ENCODE measurements at regions of chr3 and their contacts with region 1.

Region 1: GRCh38 chr3:129160891-129161859 is at the start of gene ISY1:
- DNase-seq: peak; percentile 96
- H3K4me3 ChIP-seq: peak within 1 kb of the TSS; percentile 65 to 99 (median 96)
- H3K27ac ChIP-seq: peak within 1 kb of the TSS; percentile 90
- H3K4me1 ChIP-seq: peaks cover 19% of the 10 kb centered on the region
- H3K27me3 ChIP-seq: no peaks in the 10 kb centered on the region
- CTCF ChIP-seq: peak; percentile 85 to 96
- total RNA-seq, gene ISY1: 16.8 to 38.2 TPM

Region 2: GRCh38 chr3:129052675-129053074 is 108.5 kb before region 1 on chr3:
- CTCF ChIA-PET with region 1: no interaction called
- dilution Hi-C with region 1: no loop called
- in situ Hi-C with region 1: no loop called
- intact Hi-C with region 1: loop called (anchors 1 kb)
- DNase-seq: no peak
- H3K4me3 ChIP-seq: no peak overlapping the region
- H3K27ac ChIP-seq: no peak overlapping the region
- H3K4me1 ChIP-seq: no peaks in the 10 kb centered on the region
- H3K27me3 ChIP-seq: no peaks in the 10 kb centered on the region
- CTCF ChIP-seq: no peak

Region 3: DNA sequence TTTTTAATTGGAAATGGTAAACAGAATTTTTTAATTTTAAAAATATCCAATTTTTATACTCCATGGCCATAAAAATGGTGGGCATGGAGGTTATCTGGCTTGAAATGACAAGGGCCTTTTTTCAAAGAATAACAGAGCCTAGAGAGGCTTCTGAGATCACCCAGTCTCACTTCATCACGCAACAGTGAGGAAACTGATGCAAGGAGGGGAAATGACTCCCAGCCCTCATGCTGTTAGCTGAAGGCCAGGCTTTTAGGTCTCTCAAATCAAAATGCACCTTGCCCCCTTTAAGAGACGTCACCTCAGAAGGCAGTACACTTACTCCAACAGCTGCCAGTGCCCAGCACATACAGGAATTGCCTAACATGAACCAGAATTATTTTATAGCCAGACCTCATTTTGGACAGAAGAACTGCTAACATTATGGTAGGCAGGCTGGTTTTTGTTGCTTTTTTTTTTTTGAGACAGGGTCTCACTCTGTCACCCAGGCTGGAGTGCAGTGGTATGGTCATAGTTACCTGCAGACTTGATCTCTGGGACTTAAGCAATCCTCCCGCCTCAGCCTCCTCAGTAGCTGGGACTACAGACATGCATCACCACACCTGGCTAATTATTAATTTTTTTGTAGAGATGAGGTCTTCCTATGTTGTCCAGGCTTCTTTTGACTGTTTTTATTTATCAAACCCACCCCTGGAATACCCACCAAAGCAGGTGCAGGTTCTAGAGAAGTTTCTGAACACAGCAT is 48.7 kb before region 1 on chr3:
- CTCF ChIA-PET with region 1: no interaction called
- dilution Hi-C with region 1: no loop called
- in situ Hi-C with region 1: no loop called
- intact Hi-C with region 1: no loop called
- DNase-seq: no peak
- H3K4me3 ChIP-seq: no peak overlapping the region
- H3K27ac ChIP-seq: no peak overlapping the region
- H3K4me1 ChIP-seq: no peaks in the 10 kb centered on the region
- H3K27me3 ChIP-seq: no peaks in the 10 kb centered on the region
- CTCF ChIP-seq: no peak

Region 4: GRCh38 chr3:129183569-129184395 is 22.6 kb after region 1 on chr3 and contains the start of gene CNBP:
- CTCF ChIA-PET with region 1: no interaction called
- dilution Hi-C with region 1: no loop called
- in situ Hi-C with region 1: no loop called
- intact Hi-C with region 1: loop called (anchors 1 kb)
- DNase-seq: peak; percentile 94
- H3K4me3 ChIP-seq: peak within 1 kb of the TSS; percentile 73 to 95 (median 94)
- H3K27ac ChIP-seq: peak within 1 kb of the TSS; percentile 85
- H3K4me1 ChIP-seq: peaks cover 21% of the 10 kb centered on the region
- H3K27me3 ChIP-seq: no peaks in the 10 kb centered on the region
- CTCF ChIP-seq: no peak
- total RNA-seq, gene CNBP: 252 to 307 TPM

Region 5: GRCh38 chr3:129295286-129295685 is 134.1 kb after region 1 on chr3:
- CTCF ChIA-PET with region 1: no interaction called
- dilution Hi-C with region 1: no loop called
- in situ Hi-C with region 1: no loop called
- intact Hi-C with region 1: no loop called
- DNase-seq: no peak
- H3K4me3 ChIP-seq: no peak overlapping the region
- H3K27ac ChIP-seq: no peak overlapping the region
- H3K4me1 ChIP-seq: no peaks in the 10 kb centered on the region
- H3K27me3 ChIP-seq: no peaks in the 10 kb centered on the region
- CTCF ChIP-seq: no peak

Measured in mammary epithelial cell (primary cell).